Sigmoid colon (tissue), 7 donors: ENCODE measurements at regions of chr16 and their contacts with region 1.

Region 1: DNA sequence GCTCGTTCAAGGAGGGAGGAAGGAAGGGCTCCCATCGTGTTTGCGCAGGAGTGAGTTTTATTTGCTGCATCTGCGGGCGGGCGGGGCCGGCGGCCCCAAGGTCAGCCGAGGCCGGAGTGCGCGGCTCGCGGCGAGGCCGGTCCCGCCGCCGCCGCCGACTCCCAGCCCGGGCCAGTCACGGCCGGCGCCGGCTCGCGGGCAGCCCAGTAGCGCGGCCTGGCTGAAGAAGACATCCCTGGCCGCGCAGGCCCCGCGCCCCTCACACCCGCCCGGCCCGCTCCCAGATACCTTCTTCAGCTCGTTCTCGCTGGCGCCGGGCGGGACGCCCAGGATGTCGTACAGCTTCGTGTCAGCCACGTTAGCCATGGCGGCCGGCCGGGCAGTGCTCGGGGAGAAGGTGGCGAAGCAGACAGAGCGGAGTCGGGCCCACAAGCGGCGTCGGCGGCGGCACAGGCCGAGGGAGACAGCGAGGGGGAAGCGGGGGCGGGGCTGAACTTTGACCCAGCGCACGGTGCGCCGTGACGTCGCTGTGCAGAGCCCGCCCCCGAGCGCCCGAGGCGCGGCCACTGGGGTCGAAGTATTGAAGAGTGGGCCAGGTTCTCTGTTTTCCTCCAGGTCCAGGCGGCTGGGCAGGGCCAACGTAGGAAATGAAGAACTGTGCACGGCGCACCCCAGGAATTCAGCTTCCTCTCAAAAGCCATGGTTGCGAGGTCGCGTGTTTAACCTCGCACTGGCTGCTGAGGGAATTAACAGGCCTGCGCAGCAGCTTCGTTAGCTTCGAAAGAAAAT is at the start of gene DNAJA2:
- DNase-seq: peak; percentile 96
- H3K4me3 ChIP-seq: peak within 1 kb of the TSS; percentile 80 to 95 (median 90)
- H3K27ac ChIP-seq: peak within 1 kb of the TSS; percentile 95 to 99 (median 97)
- H3K4me1 ChIP-seq: peaks cover 0 to 40% (median 32%) of the 10 kb centered on the region in 4 donors
- H3K27me3 ChIP-seq: no peaks in the 10 kb centered on the region
- CTCF ChIP-seq: no peak
- EP300 ChIP-seq: peak in 1 of 4 donors; percentile 26
- POLR2A ChIP-seq: peak; percentile 85 to 86
- total RNA-seq, gene DNAJA2: 59.0 to 68.7 (median 60.7) TPM

Region 2: GRCh38 chr16:46689365-46690280 is 283.8 kb before region 1 on chr16 and contains the start of gene ORC6:
- intact Hi-C with region 1: loop called (anchors 2 kb)
- DNase-seq: peak; percentile 99
- H3K4me3 ChIP-seq: peak within 1 kb of the TSS; percentile 85 to 97 (median 92)
- H3K27ac ChIP-seq: peak within 1 kb of the TSS; percentile 89 to 94 (median 94)
- H3K4me1 ChIP-seq: peaks cover 0 to 40% (median 35%) of the 10 kb centered on the region in 4 donors
- H3K27me3 ChIP-seq: no peaks in the 10 kb centered on the region
- CTCF ChIP-seq: no peak
- EP300 ChIP-seq: no peak
- POLR2A ChIP-seq: no peak
- total RNA-seq, gene ORC6: 0.33 to 2.5 (median 0.83) TPM

Region 3: DNA sequence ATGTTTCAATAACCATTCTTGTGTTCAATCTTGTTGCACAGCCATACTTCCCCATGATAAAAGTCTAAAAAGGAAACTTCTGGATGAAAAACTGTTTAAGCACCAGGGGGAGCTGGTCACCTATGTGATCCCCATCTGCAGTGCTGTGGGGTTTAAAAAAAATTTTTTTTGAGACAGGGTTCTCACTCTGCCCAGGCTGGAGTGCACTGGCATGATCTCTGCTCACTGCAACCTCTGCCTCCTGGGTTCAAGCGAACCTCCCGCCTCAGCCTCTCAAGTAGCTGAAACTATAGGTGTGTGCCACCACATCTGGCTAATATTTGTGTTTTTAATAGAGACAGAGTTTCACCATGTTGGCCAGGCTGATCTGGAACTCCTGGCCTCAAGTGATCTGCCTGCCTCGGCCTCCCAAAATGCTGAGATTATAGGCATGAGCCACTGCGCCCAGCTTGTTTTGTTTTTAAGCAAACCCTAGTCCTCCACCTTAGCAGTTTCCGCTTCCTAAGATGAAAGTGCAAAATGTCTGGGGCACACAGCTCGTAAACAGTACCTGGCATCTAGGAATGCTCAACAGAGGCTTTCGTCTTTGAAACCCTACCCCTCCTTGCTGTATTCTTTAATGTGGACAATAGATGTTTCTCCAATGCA is 25.4 kb before region 1 on chr16:
- intact Hi-C with region 1: no loop called
- DNase-seq: no peak
- H3K4me3 ChIP-seq: no peak overlapping the region
- H3K27ac ChIP-seq: no peak overlapping the region
- H3K4me1 ChIP-seq: no peaks in the 10 kb centered on the region
- H3K27me3 ChIP-seq: no peaks in the 10 kb centered on the region
- CTCF ChIP-seq: peak in 1 of 4 experiments; percentile 24
- EP300 ChIP-seq: no peak
- POLR2A ChIP-seq: no peak

Region 4: GRCh38 chr16:47026492-47026891 is 53.1 kb after region 1 on chr16:
- intact Hi-C with region 1: no loop called
- DNase-seq: no peak
- H3K4me3 ChIP-seq: no peak overlapping the region
- H3K27ac ChIP-seq: no peak overlapping the region
- H3K4me1 ChIP-seq: no peaks in the 10 kb centered on the region
- H3K27me3 ChIP-seq: no peaks in the 10 kb centered on the region
- CTCF ChIP-seq: no peak
- EP300 ChIP-seq: no peak
- POLR2A ChIP-seq: no peak

Region 5: DNA sequence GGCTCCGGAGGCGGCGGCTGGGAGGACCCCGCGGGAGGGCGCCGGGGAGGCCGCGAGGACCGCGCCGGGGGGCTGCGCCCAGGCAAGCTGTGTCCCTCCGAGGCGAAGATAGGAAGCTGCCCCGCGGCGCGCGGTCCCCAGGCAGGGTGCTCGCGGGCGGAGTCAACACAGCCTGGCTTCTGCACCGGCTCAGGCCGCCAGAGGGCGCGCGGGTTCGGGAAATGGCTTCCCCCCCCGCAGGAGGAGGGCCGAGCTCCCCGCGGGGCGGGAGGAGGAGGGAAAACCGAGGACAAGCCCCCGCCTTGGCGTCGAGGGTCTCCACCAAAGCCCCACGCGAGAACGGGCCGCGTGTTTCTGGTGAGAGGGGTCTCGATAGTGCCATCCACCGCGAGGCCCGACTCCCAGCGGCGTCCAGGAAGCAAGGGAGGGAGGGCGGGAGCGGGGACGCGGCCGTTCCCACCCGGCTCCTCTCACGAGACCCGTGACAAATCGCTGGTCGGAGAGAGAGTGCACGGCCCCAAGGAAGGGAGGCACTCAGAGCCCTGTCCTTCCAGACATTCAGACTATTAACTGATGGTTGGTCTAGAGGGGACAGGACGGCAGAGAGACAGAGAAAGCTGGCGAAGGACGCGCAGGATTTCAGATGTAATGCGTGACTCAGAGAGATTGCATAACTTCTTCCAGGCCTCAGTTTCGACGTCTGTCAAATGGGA is 64.5 kb after region 1 on chr16:
- intact Hi-C with region 1: loop called (anchors 2 kb)
- DNase-seq: peak; percentile 91
- H3K4me3 ChIP-seq: peak overlapping the region; percentile 45 to 67 (median 55)
- H3K27ac ChIP-seq: peak overlapping the region; percentile 58 to 74 (median 64)
- H3K4me1 ChIP-seq: peaks cover 0 to 12% (median 2%) of the 10 kb centered on the region in 4 donors
- H3K27me3 ChIP-seq: no peaks in the 10 kb centered on the region
- CTCF ChIP-seq: peak; percentile 65 to 98 (median 79)
- EP300 ChIP-seq: no peak
- POLR2A ChIP-seq: no peak

Region 6: DNA sequence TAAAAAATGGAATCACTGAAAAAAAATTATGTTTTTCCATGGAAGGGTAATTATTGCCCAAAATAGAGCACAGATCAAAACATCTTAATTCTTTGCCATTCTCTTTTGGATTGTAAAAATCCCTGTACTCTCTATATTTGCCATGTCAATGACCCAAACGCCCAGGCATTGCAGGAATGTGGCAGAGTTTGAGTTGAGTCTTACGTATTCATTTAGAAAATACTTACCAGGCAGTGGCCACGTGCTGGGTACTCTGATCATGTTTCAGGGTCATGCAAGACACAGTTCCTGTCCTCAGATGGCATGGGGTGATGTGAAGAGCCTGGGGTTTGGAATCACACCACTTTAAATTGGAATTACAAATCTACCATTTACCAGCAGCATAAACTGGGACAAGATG is 914.7 kb after region 1 on chr16:
- intact Hi-C with region 1: no loop called
- DNase-seq: no peak
- H3K4me3 ChIP-seq: no peak overlapping the region
- H3K27ac ChIP-seq: no peak overlapping the region
- H3K4me1 ChIP-seq: no peaks in the 10 kb centered on the region
- H3K27me3 ChIP-seq: peaks cover 0 to 6% (median 0%) of the 10 kb centered on the region in 3 donors
- CTCF ChIP-seq: no peak
- EP300 ChIP-seq: no peak
- POLR2A ChIP-seq: no peak